Colonic mucosa (tissue), 4 donors: ENCODE measurements at regions of chr4 and their contacts with region 1.

Region 1: GRCh38 chr4:108029731-108030130 is 40.0 kb downstream of the HADH start:
- DNase-seq: no peak
- H3K4me3 ChIP-seq: no peak overlapping the region
- H3K27ac ChIP-seq: no peak overlapping the region
- H3K4me1 ChIP-seq: no peaks in the 10 kb centered on the region
- H3K27me3 ChIP-seq: no peaks in the 10 kb centered on the region
- CTCF ChIP-seq: no peak

Region 2: DNA sequence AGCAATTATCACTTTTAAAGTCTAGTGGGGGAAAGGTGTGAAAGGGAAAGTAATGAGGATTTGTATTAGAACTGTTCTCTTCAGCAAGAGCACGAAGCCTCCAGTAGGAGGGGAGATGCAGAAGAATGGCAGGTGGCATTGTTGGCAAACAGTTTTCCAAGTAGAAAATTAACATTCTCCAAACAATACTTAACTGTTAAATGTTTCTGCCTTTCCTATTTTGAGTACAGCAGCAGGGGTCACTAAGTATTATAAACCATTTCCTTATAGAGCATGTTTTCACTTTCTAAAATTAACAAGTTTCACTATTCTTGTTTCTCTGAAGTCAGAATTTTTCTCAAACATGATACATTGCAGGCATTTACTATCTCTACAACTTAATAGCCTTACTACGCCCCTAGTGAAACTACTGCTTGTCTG is 80.3 kb after region 1 on chr4:
- intact Hi-C with region 1: no loop called
- DNase-seq: no peak
- H3K4me3 ChIP-seq: no peak overlapping the region
- H3K27ac ChIP-seq: no peak overlapping the region
- H3K4me1 ChIP-seq: no peaks in the 10 kb centered on the region
- H3K27me3 ChIP-seq: no peaks in the 10 kb centered on the region
- CTCF ChIP-seq: no peak

Region 3: DNA sequence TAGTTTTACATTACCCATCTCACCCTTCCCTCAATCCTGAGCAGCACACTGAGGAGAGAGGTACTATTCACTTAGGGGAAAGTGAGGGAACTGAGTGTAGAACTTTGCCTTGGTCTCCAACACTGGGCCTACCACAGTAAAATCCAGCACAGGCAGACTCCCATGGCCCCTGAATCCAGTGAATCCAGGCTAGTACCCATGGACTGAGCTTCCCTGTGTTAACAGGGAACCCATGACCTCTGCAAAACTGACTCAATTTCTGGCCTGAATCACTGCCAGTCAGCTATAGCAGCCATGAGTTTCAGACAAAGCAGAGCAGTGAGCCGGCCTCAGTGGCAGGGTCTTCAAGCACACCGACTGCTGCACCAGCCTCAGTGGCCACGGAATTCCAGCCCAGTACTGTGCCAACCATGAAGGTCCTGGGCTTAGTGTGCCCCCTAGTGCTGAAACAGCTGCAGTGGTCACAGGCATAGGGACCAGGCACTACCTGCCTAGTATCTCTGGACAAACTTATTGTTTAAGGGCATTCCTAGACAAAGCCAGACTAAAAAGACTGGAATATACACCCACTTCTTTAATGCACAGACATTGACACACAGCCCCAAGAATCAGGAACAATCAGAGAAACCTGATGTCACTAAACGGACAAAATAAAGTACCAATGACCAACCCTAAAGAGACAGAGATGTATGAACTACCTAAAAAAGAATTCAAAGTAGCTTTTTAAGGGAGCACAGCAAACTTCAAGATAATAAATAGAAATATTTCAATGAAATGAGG is 463.3 kb after region 1 on chr4:
- intact Hi-C with region 1: loop called (anchors 10 kb)
- DNase-seq: peak; percentile 31
- H3K4me3 ChIP-seq: no peak overlapping the region
- H3K27ac ChIP-seq: no peak overlapping the region
- H3K4me1 ChIP-seq: no peaks in the 10 kb centered on the region
- H3K27me3 ChIP-seq: no peaks in the 10 kb centered on the region
- CTCF ChIP-seq: peak; percentile 34